Kidney (tissue), 22 donors: ENCODE measurements at regions of chr3 and their contacts with region 1.

Region 1: GRCh38 chr3:159804726-159805410 is 183.8 kb upstream of the IL12A start:
- DNase-seq: peak; percentile 59 to 96 (median 81)
- H3K4me3 ChIP-seq: no peak overlapping the region
- H3K27ac ChIP-seq: no peak overlapping the region
- H3K4me1 ChIP-seq: peaks cover 0 to 28% (median 9%) of the 10 kb centered on the region in 3 donors
- H3K27me3 ChIP-seq: no peaks in the 10 kb centered on the region
- CTCF ChIP-seq: peak; percentile 78

Region 2: DNA sequence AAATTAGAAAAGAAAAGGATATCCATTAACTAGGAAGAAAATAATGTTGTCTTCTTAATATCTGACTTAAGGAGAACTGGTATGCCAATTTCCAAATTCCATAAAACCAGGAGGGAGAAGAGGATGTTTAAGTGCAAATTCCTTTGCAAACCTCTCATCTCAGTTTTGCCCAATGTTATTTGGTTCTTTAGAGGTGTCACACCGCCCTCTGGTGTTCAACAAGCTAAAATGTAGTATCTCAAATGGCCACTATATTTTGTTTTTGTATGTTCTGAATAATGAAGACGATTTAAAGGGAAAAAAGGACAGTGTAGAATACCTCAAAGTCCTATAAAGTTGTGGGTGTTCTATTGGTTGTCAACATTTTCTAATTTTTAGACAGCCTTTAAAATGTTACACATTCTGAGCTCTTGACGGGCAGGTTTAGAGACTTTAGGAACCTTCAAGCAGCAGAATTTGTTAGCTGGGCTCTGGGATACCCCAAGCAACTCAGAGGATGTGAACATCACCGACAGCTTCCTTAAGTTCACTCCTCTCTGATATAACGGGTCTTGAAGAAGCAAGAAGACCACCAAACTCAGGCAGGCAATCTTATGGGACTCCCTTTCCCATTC is 544.7 kb before region 1 on chr3:
- intact Hi-C with region 1: loop called (anchors 10 kb)
- DNase-seq: peak in 3 of 5 donors; percentile 42 to 86 (median 70)
- H3K4me3 ChIP-seq: no peak overlapping the region
- H3K27ac ChIP-seq: no peak overlapping the region
- H3K4me1 ChIP-seq: no peaks in the 10 kb centered on the region
- H3K27me3 ChIP-seq: no peaks in the 10 kb centered on the region
- CTCF ChIP-seq: peak; percentile 66

Region 3: GRCh38 chr3:159366476-159366875 is 438.4 kb before region 1 on chr3:
- intact Hi-C with region 1: no loop called
- DNase-seq: no peak
- H3K4me3 ChIP-seq: no peak overlapping the region
- H3K27ac ChIP-seq: no peak overlapping the region
- H3K4me1 ChIP-seq: no peaks in the 10 kb centered on the region
- H3K27me3 ChIP-seq: no peaks in the 10 kb centered on the region
- CTCF ChIP-seq: no peak

Region 4: GRCh38 chr3:159620873-159621272 is 184.0 kb before region 1 on chr3:
- intact Hi-C with region 1: loop called (anchors 10 kb)
- DNase-seq: no peak
- H3K4me3 ChIP-seq: no peak overlapping the region
- H3K27ac ChIP-seq: no peak overlapping the region
- H3K4me1 ChIP-seq: peaks cover 0 to 3% (median 0%) of the 10 kb centered on the region in 3 donors
- H3K27me3 ChIP-seq: no peaks in the 10 kb centered on the region
- CTCF ChIP-seq: no peak

Region 5: GRCh38 chr3:159668990-159669476 is 135.8 kb before region 1 on chr3:
- intact Hi-C with region 1: no loop called
- DNase-seq: peak in 4 of 5 donors; percentile 18 to 73 (median 53)
- H3K4me3 ChIP-seq: no peak overlapping the region
- H3K27ac ChIP-seq: peak overlapping the region; percentile 61 to 81
- H3K4me1 ChIP-seq: peaks cover 0 to 29% (median 3%) of the 10 kb centered on the region in 3 donors
- H3K27me3 ChIP-seq: no peaks in the 10 kb centered on the region
- CTCF ChIP-seq: no peak